Activated CD8-positive, alpha-beta T cell treated with anti-CD3 and anti-CD28 coated beads, Interleukin-2, amount 10 ng/mL, durations not matched to agents 7 days and 5 days (primary cell): ENCODE measurements at regions of chr6 and their contacts with region 1.

Region 1: DNA sequence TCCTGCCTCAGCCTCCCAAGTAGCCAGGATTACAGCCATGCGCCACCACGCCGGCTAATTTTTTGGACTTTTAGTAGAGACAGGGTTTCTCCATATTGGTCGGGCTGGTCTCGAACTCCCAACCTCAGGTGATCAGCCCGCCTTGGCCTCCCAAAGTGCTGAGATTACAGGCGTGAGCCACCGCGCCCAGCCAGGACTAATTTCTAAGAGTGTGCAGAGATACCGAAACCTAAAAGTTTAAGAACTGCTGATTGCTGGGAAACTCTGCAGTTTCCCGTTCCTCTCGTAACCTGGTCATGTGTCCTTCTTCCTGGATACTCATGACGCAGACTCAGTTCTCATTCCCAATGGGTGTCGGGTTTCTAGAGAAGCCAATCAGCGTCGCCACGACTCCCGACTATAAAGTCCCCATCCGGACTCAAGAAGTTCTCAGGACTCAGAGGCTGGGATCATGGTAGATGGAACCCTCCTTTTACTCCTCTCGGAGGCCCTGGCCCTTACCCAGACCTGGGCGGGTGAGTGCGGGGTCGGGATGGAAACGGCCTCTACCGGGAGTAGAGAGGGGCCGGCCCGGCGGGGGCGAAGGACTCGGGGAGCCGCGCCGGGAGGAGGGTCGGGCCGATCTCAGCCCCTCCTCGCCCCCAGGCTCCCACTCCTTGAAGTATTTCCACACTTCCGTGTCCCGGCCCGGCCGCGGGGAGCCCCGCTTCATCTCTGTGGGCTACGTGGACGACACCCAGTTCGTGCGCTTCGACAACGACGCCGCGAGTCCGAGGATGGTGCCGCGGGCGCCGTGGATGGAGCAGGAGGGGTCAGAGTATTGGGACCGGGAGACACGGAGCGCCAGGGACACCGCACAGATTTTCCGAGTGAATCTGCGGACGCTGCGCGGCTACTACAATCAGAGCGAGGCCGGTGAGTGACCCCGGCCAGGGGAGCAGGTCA is at the start of gene HLA-E:
- DNase-seq: peak; percentile 96
- ATAC-seq: peak; percentile 79
- H3K4me3 Mint-ChIP-seq: peak within 1 kb of the TSS; percentile 99
- H3K27ac Mint-ChIP-seq: peak within 1 kb of the TSS; percentile 96
- H3K4me1 Mint-ChIP-seq: peaks cover 45% of the 10 kb centered on the region
- H3K27me3 Mint-ChIP-seq: peaks cover 5% of the 10 kb centered on the region
- total RNA-seq, gene HLA-E: 523 to 536 TPM

Region 2: DNA sequence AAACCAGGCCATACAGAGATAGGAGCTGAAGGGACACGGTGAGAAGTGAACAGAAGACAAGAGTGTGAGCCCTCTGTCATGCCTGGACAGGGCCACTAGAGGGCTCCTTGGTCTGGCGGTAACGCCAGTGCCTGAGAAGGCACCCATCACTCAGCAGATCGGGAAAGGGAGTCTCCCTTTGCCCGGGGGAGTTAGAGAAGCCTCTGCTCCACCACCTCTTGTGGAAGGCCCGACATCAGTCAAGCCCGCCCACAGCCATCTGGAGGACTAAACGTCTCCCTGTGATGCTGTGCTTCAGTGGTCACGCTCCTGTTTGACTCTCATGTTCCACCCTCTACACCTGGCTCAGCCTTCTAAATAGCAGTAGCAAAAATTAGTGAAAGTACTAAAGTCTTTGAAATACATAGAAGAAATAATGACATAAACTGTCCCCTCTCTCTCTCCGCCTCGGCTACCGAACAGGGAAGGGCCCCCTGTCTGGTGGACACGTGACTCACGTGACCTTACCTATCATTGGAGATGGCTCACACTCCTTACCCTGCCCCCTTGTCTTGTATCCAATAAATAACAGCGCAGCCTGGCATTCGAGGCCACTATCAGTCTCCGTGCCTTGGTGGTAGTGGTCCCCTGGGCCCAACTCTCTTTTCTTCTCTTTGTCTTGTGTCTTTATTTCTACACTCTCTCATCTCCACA is 77.7 kb before region 1 on chr6:
- CTCF ChIA-PET with region 1: no interaction called
- POLR2A ChIA-PET with region 1: no interaction called
- DNase-seq: peak; percentile 74
- ATAC-seq: peak; percentile 68
- H3K4me3 Mint-ChIP-seq: no peak overlapping the region
- H3K27ac Mint-ChIP-seq: no peak overlapping the region
- H3K4me1 Mint-ChIP-seq: peaks cover 7% of the 10 kb centered on the region
- H3K27me3 Mint-ChIP-seq: peaks cover 62% of the 10 kb centered on the region

Region 3: DNA sequence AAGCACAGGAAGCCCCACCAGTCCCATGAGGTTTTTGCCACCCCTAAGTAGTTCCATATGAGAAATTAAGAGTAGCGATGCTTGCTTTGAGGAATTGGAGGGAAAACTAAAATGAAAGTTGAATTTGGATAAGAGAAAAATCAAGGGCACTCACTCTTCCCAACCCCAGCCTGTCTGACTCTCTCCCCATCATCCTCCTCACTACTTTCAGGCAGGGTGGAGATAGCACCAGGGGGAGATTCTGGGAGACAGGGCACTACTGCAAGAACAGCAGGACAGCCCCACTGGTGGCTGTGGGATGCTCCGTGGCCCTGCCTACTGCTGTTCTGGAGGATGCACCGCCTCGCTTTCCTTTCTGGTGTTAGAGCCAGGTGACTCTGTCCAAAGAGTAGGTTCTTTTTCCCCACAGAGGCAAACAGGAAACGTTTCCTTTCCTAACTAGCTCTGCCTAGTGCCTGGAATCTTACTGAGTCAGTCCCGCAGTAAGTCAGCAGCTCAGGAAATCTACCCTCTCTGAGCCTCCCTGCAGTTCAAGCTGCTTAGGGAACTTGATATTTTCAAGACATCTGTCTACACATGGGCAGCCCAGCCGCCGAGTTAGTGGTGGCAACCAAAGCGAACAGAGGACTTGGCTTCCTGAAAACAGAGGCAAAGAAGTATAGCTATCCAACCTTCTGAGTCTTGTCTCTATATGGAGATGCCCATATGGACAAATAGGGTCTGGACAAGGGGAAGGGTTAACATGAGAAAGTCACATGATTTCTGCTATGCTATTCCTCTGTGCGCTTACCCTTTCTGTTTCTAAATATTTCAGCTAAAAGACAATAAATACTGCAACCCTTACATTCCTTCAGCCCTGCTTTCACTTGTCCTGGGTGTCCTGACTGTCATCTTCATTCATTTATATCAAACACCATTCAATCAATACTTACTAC is 11.3 kb after region 1 on chr6:
- CTCF ChIA-PET with region 1: interaction called, 28 read pairs
- POLR2A ChIA-PET with region 1: interaction called, 29 read pairs
- DNase-seq: no peak
- ATAC-seq: peak; percentile 65
- H3K4me3 Mint-ChIP-seq: peak overlapping the region; percentile 65
- H3K27ac Mint-ChIP-seq: peak overlapping the region; percentile 76
- H3K4me1 Mint-ChIP-seq: peaks cover 29% of the 10 kb centered on the region
- H3K27me3 Mint-ChIP-seq: no peaks in the 10 kb centered on the region

Region 4: DNA sequence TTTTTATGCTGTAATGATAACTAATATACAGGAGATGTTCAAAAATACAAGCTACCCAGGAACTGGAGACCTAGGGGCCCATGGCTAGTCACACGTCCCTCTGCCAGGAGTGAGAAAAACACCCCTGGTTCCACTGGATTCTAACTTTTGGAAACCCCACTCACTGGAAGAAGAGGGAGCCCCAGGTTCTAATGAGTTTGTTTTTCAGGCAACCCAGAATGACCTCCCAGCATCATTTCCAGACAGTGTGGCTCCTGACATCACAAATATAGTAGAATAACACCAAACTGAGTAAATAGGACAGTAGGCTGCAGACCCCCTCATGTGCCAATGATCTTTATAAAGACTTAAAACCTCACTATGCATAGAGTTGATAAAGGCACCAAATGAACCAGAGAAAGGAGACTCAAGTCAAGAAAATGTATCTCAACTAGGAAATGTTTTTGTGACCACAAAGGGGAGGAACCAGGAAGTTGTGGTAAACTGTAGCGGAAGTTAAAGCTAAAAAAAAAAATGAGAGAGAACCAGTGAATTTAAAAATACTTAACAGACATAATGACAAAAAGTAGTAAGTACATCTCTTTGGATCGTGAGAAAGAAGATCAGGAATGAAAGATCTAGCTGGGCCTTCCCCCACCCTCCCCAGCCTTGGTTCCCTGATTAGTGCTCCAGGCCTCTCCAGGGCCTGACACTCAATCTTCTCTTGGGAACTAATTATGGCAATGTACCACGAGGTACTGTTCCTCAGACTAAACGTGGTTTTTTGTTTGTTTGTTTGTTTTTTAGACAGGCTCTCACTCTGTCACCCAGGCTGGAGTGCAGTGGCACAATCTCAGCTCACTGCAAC is 19.8 kb after region 1 on chr6:
- CTCF ChIA-PET with region 1: interaction called, 38 read pairs
- POLR2A ChIA-PET with region 1: interaction called, 275 read pairs
- DNase-seq: peak; percentile 68
- ATAC-seq: peak; percentile 75
- H3K4me3 Mint-ChIP-seq: peak overlapping the region; percentile 69
- H3K27ac Mint-ChIP-seq: peak overlapping the region; percentile 89
- H3K4me1 Mint-ChIP-seq: peaks cover 61% of the 10 kb centered on the region
- H3K27me3 Mint-ChIP-seq: no peaks in the 10 kb centered on the region

Region 5: DNA sequence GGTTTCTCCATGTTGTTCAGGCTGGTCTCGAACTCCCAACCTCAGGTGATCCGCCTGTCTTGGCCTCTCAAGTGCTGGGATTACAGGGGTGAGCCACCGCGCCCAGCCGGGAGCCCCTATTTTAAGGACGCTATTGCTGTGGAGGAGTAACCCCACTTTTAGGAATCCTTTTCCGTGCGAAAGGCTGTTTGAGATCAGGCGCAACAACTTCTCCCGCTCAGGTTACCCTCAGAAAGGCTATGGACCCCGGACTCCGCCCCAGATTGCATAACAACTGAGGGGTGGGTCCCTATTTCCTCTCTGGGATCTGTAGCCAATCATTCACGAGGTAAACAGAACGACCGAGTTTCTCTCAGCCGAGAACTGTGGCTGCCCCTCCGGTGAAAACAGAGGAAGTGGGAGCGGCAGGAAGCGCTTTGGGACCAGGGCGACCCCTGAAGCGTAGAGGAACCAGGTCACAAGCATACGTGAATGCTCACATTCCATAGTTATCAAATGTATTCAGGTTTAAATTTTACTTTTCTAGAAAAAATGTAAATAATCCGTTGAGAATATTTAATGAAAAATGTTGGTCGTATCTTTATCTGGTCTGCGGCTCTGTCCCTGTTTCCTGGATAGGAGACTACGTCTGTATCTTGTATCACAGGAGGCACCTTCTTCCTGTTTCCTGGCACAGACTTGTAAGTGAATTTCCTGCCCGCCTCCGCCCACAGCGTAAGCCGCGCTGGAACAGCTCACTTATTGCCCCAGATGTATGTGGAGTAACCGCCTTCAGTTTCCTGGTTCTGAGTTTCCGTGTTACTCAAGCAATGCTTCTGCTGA is 26.8 kb after region 1 on chr6:
- CTCF ChIA-PET with region 1: interaction called, 38 read pairs
- POLR2A ChIA-PET with region 1: interaction called, 275 read pairs
- DNase-seq: peak; percentile 95
- ATAC-seq: peak; percentile 92
- H3K4me3 Mint-ChIP-seq: peak overlapping the region; percentile 80
- H3K27ac Mint-ChIP-seq: peak overlapping the region; percentile 97
- H3K4me1 Mint-ChIP-seq: peaks cover 64% of the 10 kb centered on the region
- H3K27me3 Mint-ChIP-seq: no peaks in the 10 kb centered on the region

Region 6: DNA sequence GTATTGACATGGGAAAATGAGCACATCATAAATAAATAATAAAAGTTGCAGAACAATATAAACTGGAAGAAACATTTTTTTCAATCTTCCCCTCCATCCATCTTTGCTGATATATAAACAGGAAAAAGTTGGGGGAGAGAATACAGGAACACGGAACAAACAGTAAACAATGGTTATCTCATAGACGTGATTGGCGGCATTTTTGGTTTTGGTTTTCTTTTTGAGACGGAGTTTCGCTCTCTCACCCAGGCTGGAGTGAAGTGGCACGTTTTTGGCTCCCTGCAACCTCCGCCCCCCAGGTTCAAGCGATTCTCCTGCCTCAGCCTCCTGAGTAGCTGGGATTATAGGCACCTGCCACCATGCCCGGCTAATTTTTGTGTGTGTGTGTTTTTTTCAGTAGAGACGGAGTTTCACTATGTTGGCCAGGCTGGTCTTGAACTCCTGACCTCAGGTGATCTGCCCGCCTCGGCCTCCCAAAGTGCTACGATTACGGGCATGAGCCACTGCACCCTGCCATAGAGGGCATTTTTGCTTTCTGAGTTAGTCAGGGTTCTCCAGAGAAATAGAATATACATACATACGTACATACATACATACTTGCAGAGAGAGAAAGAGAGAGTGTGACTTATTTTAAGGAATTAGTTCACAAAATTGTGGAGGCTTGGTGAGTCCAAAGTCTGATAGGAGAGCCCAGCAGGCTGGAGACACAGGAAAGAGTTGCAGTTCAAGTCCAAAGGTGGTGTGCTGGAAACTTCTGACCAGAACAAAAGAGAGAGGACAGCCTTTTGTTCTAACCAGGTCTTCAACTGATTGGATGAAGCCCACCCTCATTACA is 44.3 kb after region 1 on chr6:
- CTCF ChIA-PET with region 1: interaction called, 464 read pairs
- POLR2A ChIA-PET with region 1: interaction called, 108 read pairs
- DNase-seq: no peak
- ATAC-seq: no peak
- H3K4me3 Mint-ChIP-seq: peak overlapping the region; percentile 29
- H3K27ac Mint-ChIP-seq: peak overlapping the region; percentile 54
- H3K4me1 Mint-ChIP-seq: peaks cover 31% of the 10 kb centered on the region
- H3K27me3 Mint-ChIP-seq: peaks cover 5% of the 10 kb centered on the region

Region 7: GRCh38 chr6:30556066-30556905 is 66.9 kb after region 1 on chr6 and contains the start of gene GNL1:
- CTCF ChIA-PET with region 1: interaction called, 64 read pairs
- POLR2A ChIA-PET with region 1: interaction called, 30 read pairs
- DNase-seq: peak; percentile 99
- ATAC-seq: peak; percentile 90
- H3K4me3 Mint-ChIP-seq: peak within 1 kb of the TSS; percentile 96
- H3K27ac Mint-ChIP-seq: peak within 1 kb of the TSS; percentile 96
- H3K4me1 Mint-ChIP-seq: peaks cover 30% of the 10 kb centered on the region
- H3K27me3 Mint-ChIP-seq: no peaks in the 10 kb centered on the region
- total RNA-seq, gene GNL1: 63.7 to 69.9 TPM